AG04449 (cell line): ENCODE measurements at regions of chr1 and their contacts with region 1.

Region 1: GRCh38 chr1:77704736-77705135 is 22.3 kb upstream of the ZZZ3 start:
- DNase-seq: no peak
- H3K4me3 ChIP-seq: no peak overlapping the region
- CTCF ChIP-seq: no peak

Region 2: GRCh38 chr1:77683160-77684148 is 21.3 kb before region 1 on chr1:
- CTCF ChIA-PET with region 1: interaction called, 10 read pairs
- POLR2A ChIA-PET with region 1: no interaction called
- DNase-seq: no peak
- H3K4me3 ChIP-seq: peak overlapping the region; percentile 89
- CTCF ChIP-seq: peak; percentile 80